T-cell (primary cell): ENCODE measurements at regions of chr2 and their contacts with region 1.

Region 1: GRCh38 chr2:176242276-176242675 is 27.0 kb upstream of the MTX2 start:
- DNase-seq: no peak
- ATAC-seq: no peak
- H3K4me3 ChIP-seq: no peak overlapping the region
- H3K4me3 Mint-ChIP-seq: no peak overlapping the region
- H3K27ac ChIP-seq: no peak overlapping the region
- H3K27ac Mint-ChIP-seq: no peak overlapping the region
- H3K4me1 ChIP-seq: no peaks in the 10 kb centered on the region
- H3K4me1 Mint-ChIP-seq: no peaks in the 10 kb centered on the region
- H3K27me3 ChIP-seq: peaks cover 4 to 21% of the 10 kb centered on the region in 2 experiments
- H3K27me3 Mint-ChIP-seq: peaks cover 35 to 38% of the 10 kb centered on the region in 2 donors

Region 2: DNA sequence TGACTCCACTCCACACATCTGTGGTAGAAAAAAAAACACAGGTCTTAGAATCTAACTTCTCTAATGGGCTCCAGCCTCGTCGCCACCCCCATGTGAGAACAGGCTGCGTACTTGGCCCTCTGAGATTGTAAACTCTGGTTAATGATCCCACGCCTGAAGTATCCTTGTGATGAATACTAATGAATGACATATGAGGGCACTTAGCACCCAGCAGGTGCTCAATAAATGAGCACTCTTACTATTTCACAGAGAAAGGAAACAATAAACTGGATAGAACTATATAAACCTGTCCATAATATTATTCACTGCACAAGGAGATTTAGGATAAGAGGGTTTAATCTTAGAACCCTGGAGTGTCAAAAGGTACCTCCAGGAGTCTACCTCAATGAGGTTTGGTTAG is 660.2 kb after region 1 on chr2:
- CTCF ChIA-PET with region 1: no interaction called
- POLR2A ChIA-PET with region 1: interaction called in 1 of 2 experiments, 12 read pairs
- DNase-seq: no peak
- ATAC-seq: no peak
- H3K4me3 ChIP-seq: no peak overlapping the region
- H3K4me3 Mint-ChIP-seq: no peak overlapping the region
- H3K27ac ChIP-seq: no peak overlapping the region
- H3K27ac Mint-ChIP-seq: no peak overlapping the region
- H3K4me1 ChIP-seq: no peaks in the 10 kb centered on the region
- H3K4me1 Mint-ChIP-seq: no peaks in the 10 kb centered on the region
- H3K27me3 ChIP-seq: no peaks in the 10 kb centered on the region
- H3K27me3 Mint-ChIP-seq: peaks cover 5 to 6% of the 10 kb centered on the region in 2 donors